Activated naive CD4-positive, alpha-beta T cell treated with anti-CD3 and anti-CD28 coated beads for 36 hours (primary cell): ENCODE measurements at regions of chr2 and their contacts with region 1.

Region 1: GRCh38 chr2:241102239-241102803 is at the start of gene MTERF4:
- DNase-seq: peak; percentile 93
- H3K4me3 Mint-ChIP-seq: peak within 1 kb of the TSS; percentile 97
- H3K27ac Mint-ChIP-seq: peak within 1 kb of the TSS; percentile 99
- H3K4me1 Mint-ChIP-seq: peaks cover 62% of the 10 kb centered on the region
- H3K27me3 Mint-ChIP-seq: no peaks in the 10 kb centered on the region
- total RNA-seq, gene MTERF4: 35.0 to 38.6 TPM

Region 2: DNA sequence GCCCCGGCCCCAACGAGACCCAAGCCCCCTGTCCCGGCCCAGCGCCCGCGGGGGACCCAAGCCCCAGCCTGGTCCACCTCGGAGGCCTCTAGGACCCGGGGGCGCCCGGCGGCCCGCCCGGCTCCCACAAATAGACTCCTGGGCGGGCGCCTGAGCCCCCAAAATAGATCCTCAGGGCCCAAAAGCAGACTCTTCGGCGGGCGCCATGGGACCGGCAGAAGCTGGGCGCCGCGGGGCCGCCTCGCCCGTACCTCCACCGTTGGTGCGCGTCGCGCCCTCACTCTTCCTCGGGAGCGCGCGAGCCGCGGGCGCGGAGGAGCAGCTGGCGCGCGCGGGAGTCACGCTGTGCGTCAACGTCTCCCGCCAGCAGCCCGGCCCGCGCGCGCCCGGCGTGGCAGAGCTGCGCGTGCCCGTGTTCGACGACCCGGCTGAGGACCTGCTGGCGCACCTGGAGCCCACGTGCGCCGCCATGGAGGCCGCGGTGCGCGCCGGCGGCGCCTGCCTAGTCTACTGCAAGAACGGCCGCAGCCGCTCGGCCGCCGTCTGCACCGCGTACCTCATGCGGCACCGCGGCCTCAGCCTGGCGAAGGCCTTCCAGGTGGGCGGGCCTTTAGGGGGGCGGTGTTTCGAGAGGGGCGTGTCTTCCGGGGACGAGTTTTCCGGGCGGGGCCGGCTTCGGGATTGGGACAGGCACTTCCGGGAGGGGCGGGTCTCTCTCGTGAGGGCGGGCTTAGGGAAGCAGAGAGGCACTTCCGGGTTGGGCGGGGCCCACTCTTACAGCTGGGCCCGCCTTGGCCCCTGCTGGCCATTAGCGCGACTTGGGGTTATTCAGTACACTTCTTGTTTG is 541.6 kb before region 1 on chr2:
- CTCF ChIA-PET with region 1: no interaction called
- intact Hi-C with region 1: loop called (anchors 5 kb)
- DNase-seq: peak; percentile 100
- H3K4me3 Mint-ChIP-seq: peak overlapping the region; percentile 94
- H3K27ac Mint-ChIP-seq: peak overlapping the region; percentile 99
- H3K4me1 Mint-ChIP-seq: peaks cover 69% of the 10 kb centered on the region
- H3K27me3 Mint-ChIP-seq: no peaks in the 10 kb centered on the region

Region 3: DNA sequence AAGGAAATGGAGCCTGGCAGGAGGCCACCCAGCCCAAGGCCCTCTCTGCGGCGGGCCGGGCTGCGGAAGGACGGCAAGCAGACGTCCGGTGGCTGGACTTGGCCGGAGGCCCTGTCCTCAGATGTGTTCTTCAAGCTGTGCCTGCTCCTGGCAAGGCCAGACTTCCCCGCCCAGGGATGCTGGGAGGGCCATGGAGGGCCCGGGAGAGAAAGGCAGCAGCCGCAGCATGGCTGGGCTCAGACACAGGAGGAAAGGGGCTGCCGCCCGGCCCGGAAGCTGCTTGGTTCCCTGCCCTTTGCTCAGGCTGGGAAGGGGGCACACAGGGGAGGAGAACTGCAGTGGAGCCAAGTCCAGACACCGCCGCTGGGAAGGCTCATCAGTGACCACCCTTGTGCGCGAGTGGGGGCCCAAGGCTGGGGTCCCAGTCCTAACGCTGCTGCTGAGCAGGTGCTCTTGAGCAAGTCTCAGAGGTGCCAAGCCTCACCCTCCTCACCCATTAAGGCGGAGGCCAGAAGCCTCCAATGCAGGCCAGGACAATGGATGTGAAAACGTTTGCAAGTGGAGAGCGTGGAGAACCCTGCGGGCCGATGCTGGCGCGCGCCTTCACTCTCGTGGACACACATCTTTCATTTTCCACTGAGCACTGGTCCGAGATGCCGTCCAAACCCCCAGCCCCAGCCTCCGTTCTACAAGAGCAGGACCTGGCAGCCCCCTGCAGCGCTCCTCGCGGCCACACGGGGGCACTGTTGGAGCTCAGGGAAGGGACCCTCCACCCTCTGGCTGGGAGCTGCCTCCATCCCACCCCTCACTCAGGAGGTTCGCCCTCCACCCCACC is 188.3 kb before region 1 on chr2:
- CTCF ChIA-PET with region 1: no interaction called
- intact Hi-C with region 1: no loop called
- DNase-seq: peak; percentile 75
- H3K4me3 Mint-ChIP-seq: no peak overlapping the region
- H3K27ac Mint-ChIP-seq: no peak overlapping the region
- H3K4me1 Mint-ChIP-seq: no peaks in the 10 kb centered on the region
- H3K27me3 Mint-ChIP-seq: peaks cover 10% of the 10 kb centered on the region

Region 4: GRCh38 chr2:241125626-241126025 is 23.3 kb after region 1 on chr2:
- CTCF ChIA-PET with region 1: interaction called, 3 read pairs
- intact Hi-C with region 1: loop called (anchors 2 kb)
- DNase-seq: no peak
- H3K4me3 Mint-ChIP-seq: no peak overlapping the region
- H3K27ac Mint-ChIP-seq: no peak overlapping the region
- H3K4me1 Mint-ChIP-seq: peaks cover 38% of the 10 kb centered on the region
- H3K27me3 Mint-ChIP-seq: no peaks in the 10 kb centered on the region

Region 5: GRCh38 chr2:241137276-241138190 is 35.2 kb after region 1 on chr2:
- CTCF ChIA-PET with region 1: no interaction called
- intact Hi-C with region 1: no loop called
- DNase-seq: no peak
- H3K4me3 Mint-ChIP-seq: no peak overlapping the region
- H3K27ac Mint-ChIP-seq: no peak overlapping the region
- H3K4me1 Mint-ChIP-seq: no peaks in the 10 kb centered on the region
- H3K27me3 Mint-ChIP-seq: no peaks in the 10 kb centered on the region

Region 6: DNA sequence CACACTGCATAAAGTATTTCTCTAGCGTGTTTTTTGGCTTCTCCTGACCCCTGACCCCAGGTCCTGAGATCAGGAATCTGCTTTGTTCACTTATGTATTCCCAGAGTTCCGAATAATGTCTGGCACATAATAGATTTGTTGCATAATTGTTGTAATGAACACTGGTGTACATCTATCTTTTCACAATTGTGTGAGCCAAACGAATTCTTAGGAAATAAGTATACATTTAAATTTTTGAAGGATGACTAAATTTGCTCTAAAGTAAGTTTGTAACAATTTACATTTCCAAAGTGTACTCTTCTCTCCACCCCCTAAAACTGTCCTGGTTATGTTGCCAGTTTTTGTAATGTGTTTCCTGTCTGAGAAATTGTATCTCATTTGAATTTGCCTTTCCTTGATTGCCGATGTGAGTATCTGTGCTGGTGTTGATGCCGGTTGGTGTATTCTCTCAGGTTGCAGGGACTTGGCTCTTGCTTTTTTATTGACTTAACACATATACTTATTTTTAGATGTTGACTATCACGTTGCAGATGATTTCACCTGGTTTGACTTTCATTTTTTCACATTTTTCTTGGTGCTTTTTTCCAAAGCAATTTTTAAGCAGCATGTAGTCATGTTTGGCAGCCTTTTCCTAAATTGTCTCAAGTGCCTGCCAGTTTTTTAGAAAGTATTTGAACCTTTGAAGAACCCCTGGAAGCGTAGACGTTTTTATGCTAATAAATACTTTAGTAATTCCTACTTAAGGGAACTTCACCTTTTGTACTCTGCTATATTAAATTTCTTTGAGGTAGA is 237.7 kb after region 1 on chr2:
- CTCF ChIA-PET with region 1: no interaction called
- intact Hi-C with region 1: no loop called
- DNase-seq: no peak
- H3K4me3 Mint-ChIP-seq: no peak overlapping the region
- H3K27ac Mint-ChIP-seq: peak overlapping the region; percentile 80
- H3K4me1 Mint-ChIP-seq: peaks cover 44% of the 10 kb centered on the region
- H3K27me3 Mint-ChIP-seq: no peaks in the 10 kb centered on the region

Region 7: DNA sequence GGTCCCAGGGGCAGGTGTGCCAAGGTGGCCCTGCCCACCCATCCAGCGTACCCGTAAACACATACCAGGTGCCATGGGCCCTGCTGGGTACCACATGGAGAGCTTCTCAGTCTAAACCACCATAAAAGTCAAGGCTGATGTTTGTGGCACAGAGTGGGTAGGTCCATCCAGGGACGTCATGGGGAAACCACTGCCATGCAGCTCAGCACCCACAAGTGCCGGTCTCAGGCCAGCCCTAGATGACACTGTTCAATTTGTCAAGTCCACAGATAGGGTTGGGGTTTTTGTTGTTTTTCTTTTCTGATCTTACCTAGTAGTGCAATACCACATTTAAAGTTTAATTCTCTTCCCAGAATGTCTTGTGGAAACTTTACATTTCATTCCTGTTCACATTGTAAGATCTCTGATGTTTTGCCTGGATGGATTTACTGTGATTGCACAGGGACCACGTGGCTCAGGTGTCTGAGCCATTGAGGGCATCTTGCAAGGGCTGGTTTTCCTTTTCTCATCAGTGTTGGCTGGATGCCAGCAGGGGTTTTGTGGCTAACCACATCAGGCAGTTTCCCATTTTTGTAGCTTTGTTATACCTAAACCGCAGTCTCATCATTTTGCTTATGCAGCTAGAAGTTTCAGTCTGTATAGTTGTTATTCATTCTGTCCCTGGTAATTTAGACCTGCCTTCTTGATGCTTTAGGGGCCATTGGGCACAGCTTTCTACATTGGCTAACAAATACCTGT is 341.3 kb after region 1 on chr2:
- CTCF ChIA-PET with region 1: no interaction called
- intact Hi-C with region 1: loop called (anchors 5 kb)
- DNase-seq: peak; percentile 98
- H3K4me3 Mint-ChIP-seq: no peak overlapping the region
- H3K27ac Mint-ChIP-seq: peak overlapping the region; percentile 22
- H3K4me1 Mint-ChIP-seq: peaks cover 24% of the 10 kb centered on the region
- H3K27me3 Mint-ChIP-seq: peaks cover 54% of the 10 kb centered on the region

Region 8: GRCh38 chr2:241686649-241687425 is 584.5 kb after region 1 on chr2 and contains the start of gene DTYMK:
- CTCF ChIA-PET with region 1: no interaction called
- intact Hi-C with region 1: loop called (anchors 2 kb)
- DNase-seq: peak; percentile 97
- H3K4me3 Mint-ChIP-seq: peak within 1 kb of the TSS; percentile 99
- H3K27ac Mint-ChIP-seq: peak within 1 kb of the TSS; percentile 94
- H3K4me1 Mint-ChIP-seq: peaks cover 39% of the 10 kb centered on the region
- H3K27me3 Mint-ChIP-seq: no peaks in the 10 kb centered on the region
- total RNA-seq, gene DTYMK: 88.0 to 93.8 TPM

Region 9: DNA sequence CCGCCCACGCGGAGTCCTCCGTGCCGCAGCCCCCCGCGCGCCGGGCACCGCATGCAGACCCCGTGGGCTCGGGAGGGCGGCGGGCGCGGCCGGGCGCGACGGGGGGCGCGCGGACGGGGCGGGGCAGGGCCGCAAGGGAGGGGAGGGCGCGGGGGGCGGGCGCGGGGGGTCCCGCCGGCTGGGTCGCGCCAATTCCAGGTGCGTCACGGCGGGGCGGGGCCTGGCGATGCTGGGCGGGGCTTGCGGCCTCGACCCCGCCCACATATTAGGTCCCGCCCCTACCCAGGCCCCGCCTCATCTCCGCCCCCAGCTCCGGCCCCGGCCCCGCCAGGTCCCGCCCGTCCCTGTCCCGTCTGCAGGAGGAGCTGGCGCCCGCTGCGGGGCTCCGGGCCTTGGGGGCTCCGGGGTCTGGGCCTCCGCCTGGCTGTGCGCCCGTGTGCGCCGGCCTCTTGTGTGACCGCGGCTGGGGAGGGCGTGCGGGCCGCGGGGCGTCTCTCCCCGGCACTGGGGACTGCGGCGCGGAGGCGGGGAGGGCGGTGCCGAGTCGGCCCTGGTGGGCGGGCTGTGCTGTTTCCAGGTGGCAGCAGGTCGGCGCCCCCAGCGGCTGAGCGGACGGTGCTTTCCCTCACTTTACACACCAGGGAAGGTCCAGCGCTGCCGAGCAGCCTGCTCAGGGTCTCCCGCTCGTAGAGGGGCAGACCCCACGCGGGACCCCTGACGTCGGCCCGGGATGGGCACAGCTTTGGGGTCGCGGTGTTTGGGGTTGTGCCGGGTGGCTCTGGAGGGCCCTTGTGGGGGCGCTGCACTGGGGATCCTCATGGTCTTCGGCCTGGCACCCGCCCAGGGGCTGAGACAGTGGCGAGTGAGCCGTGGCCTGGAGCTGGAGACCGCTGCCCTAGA is 600.1 kb after region 1 on chr2:
- CTCF ChIA-PET with region 1: no interaction called
- intact Hi-C with region 1: loop called (anchors 5 kb)
- DNase-seq: peak; percentile 82
- H3K4me3 Mint-ChIP-seq: peak overlapping the region; percentile 82
- H3K27ac Mint-ChIP-seq: peak overlapping the region; percentile 61
- H3K4me1 Mint-ChIP-seq: peaks cover 24% of the 10 kb centered on the region
- H3K27me3 Mint-ChIP-seq: no peaks in the 10 kb centered on the region

Region 10: GRCh38 chr2:241844066-241844728 is 741.9 kb after region 1 on chr2:
- CTCF ChIA-PET with region 1: no interaction called
- intact Hi-C with region 1: loop called (anchors 5 kb)
- DNase-seq: peak; percentile 90
- H3K4me3 Mint-ChIP-seq: peak overlapping the region; percentile 56
- H3K27ac Mint-ChIP-seq: peak overlapping the region; percentile 74
- H3K4me1 Mint-ChIP-seq: peaks cover 37% of the 10 kb centered on the region
- H3K27me3 Mint-ChIP-seq: peaks cover 6% of the 10 kb centered on the region